ENCODE measurements at regions of chr2 and their contacts with region 1.

Region 1: GRCh38 chr2:176879426-176879995 is 333.1 kb upstream of the HNRNPA3 start:
- DNase-seq: no peak
- ATAC-seq: no peak
- H3K4me3 ChIP-seq: no peak overlapping the region
- H3K27ac ChIP-seq: no peak overlapping the region
- H3K4me1 ChIP-seq: no peaks in the 10 kb centered on the region
- H3K27me3 ChIP-seq: no peaks in the 10 kb centered on the region
- CTCF ChIP-seq: no peak
- EP300 ChIP-seq: no peak
- POLR2A ChIP-seq: no peak
- RAD21 ChIP-seq: no peak

Region 2: GRCh38 chr2:176851200-176851888 is 28.2 kb before region 1 on chr2:
- CTCF ChIA-PET with region 1: no interaction called
- POLR2A ChIA-PET with region 1: no interaction called
- RAD21 ChIA-PET with region 1: interaction called, 3 read pairs
- SMC1A ChIA-PET with region 1: interaction called, 10 read pairs
- in situ Hi-C with region 1: no loop called
- intact Hi-C with region 1: no loop called
- DNase-seq: no peak
- ATAC-seq: no peak
- H3K4me3 ChIP-seq: no peak overlapping the region
- H3K27ac ChIP-seq: no peak overlapping the region
- H3K4me1 ChIP-seq: no peaks in the 10 kb centered on the region
- H3K27me3 ChIP-seq: no peaks in the 10 kb centered on the region
- CTCF ChIP-seq: no peak
- EP300 ChIP-seq: no peak
- POLR2A ChIP-seq: no peak
- RAD21 ChIP-seq: no peak

Region 3: DNA sequence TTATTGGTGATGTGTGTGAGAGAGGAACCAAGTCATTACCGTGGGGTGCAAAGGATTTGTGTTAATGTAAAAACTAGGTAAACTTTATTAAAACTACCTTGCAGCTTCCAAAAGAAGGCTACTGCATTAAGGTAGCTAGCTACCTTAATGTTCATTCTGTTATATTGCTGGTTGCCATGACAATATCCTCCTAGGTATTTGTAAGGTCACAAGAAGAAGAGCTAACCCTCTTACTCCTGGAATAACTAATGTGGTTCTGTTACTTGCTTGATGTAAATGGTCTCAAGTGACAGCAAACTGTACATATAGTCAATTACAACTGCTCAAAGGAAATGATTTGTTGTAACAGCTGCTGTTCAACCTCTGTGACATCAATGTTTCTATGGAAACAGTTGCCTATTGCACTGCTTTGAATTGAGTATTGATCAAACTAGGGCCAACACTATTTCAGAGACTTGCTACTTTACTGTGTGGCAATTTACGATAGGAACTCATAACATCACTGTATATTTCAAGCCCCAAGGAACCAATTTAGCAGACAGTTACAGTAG is 13.2 kb after region 1 on chr2:
- CTCF ChIA-PET with region 1: interaction called, 3 read pairs
- POLR2A ChIA-PET with region 1: no interaction called
- RAD21 ChIA-PET with region 1: no interaction called
- SMC1A ChIA-PET with region 1: interaction called, 14 read pairs
- in situ Hi-C with region 1: no loop called
- intact Hi-C with region 1: no loop called
- DNase-seq: no peak
- ATAC-seq: no peak; the same call in 2 of the 3 replicates
- H3K4me3 ChIP-seq: no peak overlapping the region
- H3K27ac ChIP-seq: no peak overlapping the region
- H3K4me1 ChIP-seq: no peaks in the 10 kb centered on the region
- H3K27me3 ChIP-seq: no peaks in the 10 kb centered on the region
- CTCF ChIP-seq: no peak
- EP300 ChIP-seq: no peak
- POLR2A ChIP-seq: no peak
- RAD21 ChIP-seq: no peak

Measured in GM12878 (cell line).